BJ (cell line): ENCODE measurements at regions of chr4 and their contacts with region 1.

Region 1: GRCh38 chr4:60581919-60582536 is 618.1 kb upstream of the ADGRL3 start:
- DNase-seq: no peak
- H3K4me3 ChIP-seq: no peak overlapping the region
- H3K27me3 ChIP-seq: no peaks in the 10 kb centered on the region
- CTCF ChIP-seq: no peak

Region 2: GRCh38 chr4:60500810-60501209 is 81.2 kb before region 1 on chr4:
- CTCF ChIA-PET with region 1: no interaction called
- POLR2A ChIA-PET with region 1: no interaction called
- DNase-seq: no peak
- H3K4me3 ChIP-seq: no peak overlapping the region
- H3K27me3 ChIP-seq: no peaks in the 10 kb centered on the region
- CTCF ChIP-seq: no peak

Region 3: DNA sequence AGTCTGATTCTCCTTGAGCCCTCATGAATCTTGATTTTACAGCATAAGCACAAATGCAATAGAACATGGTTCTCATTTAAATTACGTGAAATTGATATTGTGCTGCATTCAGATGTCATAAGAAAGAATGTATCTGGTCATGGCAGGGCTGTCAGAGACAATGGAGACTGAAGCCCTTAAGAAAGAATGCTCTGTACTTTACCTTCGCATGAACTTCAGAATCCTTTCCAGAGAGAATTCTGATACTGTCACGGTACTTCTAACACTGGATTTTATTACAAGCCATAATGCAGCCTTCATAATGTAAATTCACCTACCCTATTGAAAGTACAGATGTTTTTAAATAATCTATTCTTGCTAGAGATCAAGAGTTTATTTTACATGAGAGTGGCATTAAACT is 59.8 kb before region 1 on chr4:
- CTCF ChIA-PET with region 1: no interaction called
- POLR2A ChIA-PET with region 1: interaction called, 10 read pairs
- DNase-seq: no peak
- H3K4me3 ChIP-seq: no peak overlapping the region
- H3K27me3 ChIP-seq: no peaks in the 10 kb centered on the region
- CTCF ChIP-seq: no peak